ENCODE measurements at regions of chr6 and their contacts with region 1.

Region 1: DNA sequence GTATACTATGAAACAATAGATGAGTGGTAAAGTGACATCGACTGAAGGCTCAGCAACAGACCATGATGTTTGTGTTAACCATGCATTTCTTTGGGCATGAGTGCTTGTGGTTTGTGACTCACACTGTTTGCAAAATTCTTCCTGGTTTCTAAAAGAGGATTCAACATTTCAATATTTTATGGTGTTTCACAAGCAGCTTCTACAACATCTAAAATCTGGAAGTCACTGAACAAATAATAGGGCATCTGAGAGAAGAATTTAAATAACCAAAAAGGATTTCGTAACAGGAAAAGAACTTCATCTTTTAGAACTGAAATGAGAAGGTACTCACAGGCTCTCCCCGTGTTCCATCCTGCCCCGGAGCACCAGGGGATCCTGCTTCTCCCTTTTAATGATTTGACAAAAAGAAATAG is 146.2 kb downstream of the COL21A1 start:
- DNase-seq: peak; percentile 37 to 89
- H3K4me3 ChIP-seq: no peak overlapping the region
- H3K27ac ChIP-seq: peak overlapping the region; percentile 61
- H3K4me1 ChIP-seq: peaks cover 14% of the 10 kb centered on the region
- H3K27me3 ChIP-seq: no peaks in the 10 kb centered on the region
- CTCF ChIP-seq: no peak

Region 2: DNA sequence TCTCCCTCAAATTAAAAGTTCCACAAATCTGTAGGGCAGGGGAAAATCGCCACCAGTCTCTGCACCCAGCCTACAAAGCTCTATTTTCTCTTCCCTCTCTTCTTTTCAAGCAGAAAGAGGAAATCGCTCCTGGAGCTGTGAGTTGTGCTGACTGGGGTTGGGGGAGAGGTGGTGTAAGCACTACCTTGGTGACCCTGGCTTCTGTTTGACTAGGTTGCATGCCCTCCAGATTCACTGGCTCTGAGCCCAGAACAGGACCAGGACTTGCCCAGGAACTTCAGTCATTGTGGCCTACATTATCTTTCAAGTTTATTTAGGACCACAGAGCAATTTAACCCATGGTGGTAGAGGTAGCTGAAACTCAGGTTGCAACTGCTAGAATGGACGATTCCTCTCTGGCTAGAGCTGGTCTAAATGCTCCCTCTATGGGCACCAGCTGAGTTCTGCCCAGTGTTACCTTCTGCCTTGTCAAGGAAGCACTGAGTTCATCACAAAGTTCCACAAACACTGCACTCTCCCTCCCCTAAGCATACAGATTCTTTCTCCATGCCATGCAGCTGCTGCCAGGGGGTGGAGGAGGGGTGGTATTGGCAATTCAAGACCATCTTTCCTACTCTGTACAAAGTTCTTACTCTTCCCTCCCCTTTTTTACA is 103.8 kb before region 1 on chr6:
- CTCF ChIA-PET with region 1: no interaction called
- POLR2A ChIA-PET with region 1: no interaction called
- intact Hi-C with region 1: loop called (anchors 10 kb)
- DNase-seq: no peak
- H3K4me3 ChIP-seq: no peak overlapping the region
- H3K27ac ChIP-seq: no peak overlapping the region
- H3K4me1 ChIP-seq: no peaks in the 10 kb centered on the region
- H3K27me3 ChIP-seq: no peaks in the 10 kb centered on the region
- CTCF ChIP-seq: no peak

Region 3: DNA sequence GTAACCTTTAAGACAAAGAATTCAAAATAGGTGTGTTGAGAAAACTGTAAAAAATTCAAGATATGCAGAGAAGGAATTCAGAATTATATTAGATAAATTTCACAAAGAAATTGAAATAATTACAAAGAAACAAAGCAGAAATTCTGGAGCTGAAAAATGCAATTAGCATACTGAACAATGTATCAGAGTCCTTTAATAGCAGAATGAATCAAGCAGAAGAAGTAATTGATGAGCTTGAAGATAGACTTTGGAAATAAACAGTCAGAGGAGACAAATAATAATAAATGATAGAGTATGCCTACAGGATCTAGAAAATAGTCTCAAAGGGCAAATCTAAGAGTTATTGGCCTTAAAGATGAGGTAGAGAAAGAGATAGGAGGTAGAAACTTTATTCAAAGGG is 14.6 kb after region 1 on chr6:
- CTCF ChIA-PET with region 1: no interaction called
- POLR2A ChIA-PET with region 1: no interaction called
- intact Hi-C with region 1: no loop called
- DNase-seq: no peak
- H3K4me3 ChIP-seq: no peak overlapping the region
- H3K27ac ChIP-seq: no peak overlapping the region
- H3K4me1 ChIP-seq: no peaks in the 10 kb centered on the region
- H3K27me3 ChIP-seq: no peaks in the 10 kb centered on the region
- CTCF ChIP-seq: no peak

Region 4: DNA sequence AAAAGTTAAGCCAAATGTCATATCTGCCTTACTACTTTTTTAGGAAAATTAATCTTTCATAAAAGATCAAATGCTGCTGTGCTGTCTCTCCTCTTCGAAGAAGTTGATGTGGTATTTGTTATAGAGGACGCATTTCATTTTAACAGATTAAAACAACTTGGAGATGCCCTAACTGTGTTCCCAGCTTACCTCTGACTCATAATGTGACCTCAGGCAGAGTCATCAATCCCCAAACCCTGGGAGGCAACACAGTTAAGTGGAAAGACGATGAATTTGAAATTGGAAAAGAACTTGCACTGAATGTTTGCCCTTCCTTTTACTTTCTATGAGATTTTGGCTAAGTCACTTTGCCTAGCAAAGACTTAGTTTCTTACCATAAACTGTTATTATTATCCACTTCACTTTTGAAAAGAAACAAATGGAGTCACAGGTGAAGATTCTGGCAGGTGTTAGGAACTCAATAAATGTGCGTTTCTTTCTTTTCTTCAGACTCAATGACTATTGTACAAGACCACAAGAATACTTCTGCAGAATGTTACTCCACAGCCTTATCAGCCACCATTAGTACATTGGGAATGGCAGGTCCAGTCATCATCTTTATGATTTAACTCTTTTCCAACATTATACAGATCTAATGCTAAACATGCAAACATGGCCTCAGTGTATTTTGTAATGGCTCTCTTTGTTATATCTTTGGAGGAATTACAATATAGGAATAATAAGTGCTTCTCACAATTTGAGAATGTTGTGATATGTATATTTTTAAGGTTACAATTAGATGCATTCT is 43.6 kb after region 1 on chr6:
- CTCF ChIA-PET with region 1: no interaction called
- POLR2A ChIA-PET with region 1: no interaction called
- intact Hi-C with region 1: no loop called
- DNase-seq: no peak
- H3K4me3 ChIP-seq: no peak overlapping the region
- H3K27ac ChIP-seq: no peak overlapping the region
- H3K4me1 ChIP-seq: no peaks in the 10 kb centered on the region
- H3K27me3 ChIP-seq: no peaks in the 10 kb centered on the region
- CTCF ChIP-seq: no peak

Region 5: GRCh38 chr6:56246881-56247653 is 145.9 kb after region 1 on chr6 and contains the start of gene COL21A1:
- CTCF ChIA-PET with region 1: no interaction called
- POLR2A ChIA-PET with region 1: no interaction called
- intact Hi-C with region 1: loop called (anchors 10 kb)
- DNase-seq: peak in 1 of 2 experiments; percentile 42
- H3K4me3 ChIP-seq: peak within 1 kb of the TSS; percentile 31; the same call in 1 of the 2 replicates
- H3K27ac ChIP-seq: no peak within 1 kb of the TSS
- H3K4me1 ChIP-seq: no peaks in the 10 kb centered on the region
- H3K27me3 ChIP-seq: peaks cover 11% of the 10 kb centered on the region
- CTCF ChIP-seq: no peak
- total RNA-seq, gene COL21A1: 0.13 TPM in 1 of 2 replicates, not detected in the other